CD4-positive, alpha-beta memory T cell (primary cell): ENCODE measurements at regions of chr10 and their contacts with region 1.

Region 1: GRCh38 chr10:11757821-11758463 is 15.8 kb downstream of the ECHDC3 start:
- DNase-seq: peak; percentile 70 to 82 (median 76)
- H3K4me3 ChIP-seq: no peak overlapping the region
- H3K4me3 Mint-ChIP-seq: no peak overlapping the region
- H3K27ac ChIP-seq: no peak overlapping the region
- H3K27ac Mint-ChIP-seq: peak overlapping the region in 2 of 7 donors; percentile 25 to 66
- H3K4me1 ChIP-seq: no peaks in the 10 kb centered on the region
- H3K4me1 Mint-ChIP-seq: peaks cover 0 to 4% (median 3%) of the 10 kb centered on the region in 4 donors
- H3K27me3 ChIP-seq: no peaks in the 10 kb centered on the region
- H3K27me3 Mint-ChIP-seq: peaks cover 0 to 1% of the 10 kb centered on the region in 2 donors

Region 2: GRCh38 chr10:11515596-11516430 is 242.1 kb before region 1 on chr10:
- CTCF ChIA-PET with region 1: interaction called, 132 read pairs
- POLR2A ChIA-PET with region 1: interaction called, 4 read pairs
- intact Hi-C with region 1: loop called (anchors 1 kb)
- DNase-seq: peak; percentile 43 to 60 (median 58)
- H3K4me3 ChIP-seq: no peak overlapping the region
- H3K4me3 Mint-ChIP-seq: no peak overlapping the region
- H3K27ac ChIP-seq: no peak overlapping the region
- H3K27ac Mint-ChIP-seq: no peak overlapping the region
- H3K4me1 ChIP-seq: no peaks in the 10 kb centered on the region
- H3K4me1 Mint-ChIP-seq: peaks cover 2 to 4% (median 3%) of the 10 kb centered on the region in 4 donors
- H3K27me3 ChIP-seq: no peaks in the 10 kb centered on the region
- H3K27me3 Mint-ChIP-seq: peaks cover 0 to 2% of the 10 kb centered on the region in 2 donors

Region 3: DNA sequence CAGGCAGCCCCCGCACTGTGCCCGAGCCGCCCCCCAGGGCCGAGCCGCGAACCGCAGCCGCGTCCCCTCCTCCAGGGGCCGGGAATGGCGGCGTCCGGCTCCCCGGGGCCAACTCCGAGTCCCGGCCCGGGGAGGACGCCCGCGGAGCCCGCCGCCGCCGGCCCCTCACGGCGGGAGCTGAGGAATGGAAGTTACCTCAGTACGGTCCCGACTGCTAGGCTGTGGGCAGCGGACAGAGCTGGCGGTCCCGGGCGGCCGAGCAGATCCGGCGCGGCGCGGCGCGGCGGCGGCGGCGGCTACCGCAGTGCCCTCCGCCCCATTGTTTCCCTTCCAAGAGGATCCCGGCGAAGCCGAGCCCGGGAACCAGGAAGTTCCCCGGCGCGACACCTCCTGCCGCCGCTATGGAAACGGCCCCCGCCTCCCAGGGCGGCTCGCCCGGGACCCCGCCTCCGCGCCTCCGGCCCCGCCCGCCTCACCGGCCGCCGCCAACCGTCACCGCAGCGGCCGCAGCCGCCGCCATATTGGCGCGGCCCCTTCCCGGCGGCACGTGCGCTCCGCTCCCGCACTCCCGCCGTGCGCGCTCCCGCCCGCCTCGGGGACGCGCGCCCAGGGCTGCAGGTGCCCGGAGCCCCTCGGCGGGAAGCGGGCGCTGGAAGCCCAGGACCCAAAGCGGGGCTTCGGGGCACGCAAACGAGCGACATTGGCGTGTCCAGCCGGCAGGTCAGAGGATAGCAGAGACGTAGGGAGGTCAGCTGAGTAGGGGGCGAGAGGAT is 146.5 kb before region 1 on chr10 and contains the start of gene USP6NL:
- CTCF ChIA-PET with region 1: no interaction called
- POLR2A ChIA-PET with region 1: no interaction called
- intact Hi-C with region 1: loop called (anchors 10 kb)
- DNase-seq: peak; percentile 48 to 66 (median 59)
- H3K4me3 ChIP-seq: peak within 1 kb of the TSS; percentile 46 to 71
- H3K4me3 Mint-ChIP-seq: peak within 1 kb of the TSS; percentile 89 to 95 (median 94)
- H3K27ac ChIP-seq: peak within 1 kb of the TSS; percentile 25
- H3K27ac Mint-ChIP-seq: peak within 1 kb of the TSS; percentile 80 to 94 (median 91)
- H3K4me1 ChIP-seq: peaks cover 27% of the 10 kb centered on the region
- H3K4me1 Mint-ChIP-seq: peaks cover 24 to 42% (median 39%) of the 10 kb centered on the region in 4 donors
- H3K27me3 ChIP-seq: no peaks in the 10 kb centered on the region
- H3K27me3 Mint-ChIP-seq: peaks cover 1 to 2% of the 10 kb centered on the region in 2 donors
- total RNA-seq, gene USP6NL: 3.9 to 4.8 TPM

Region 4: GRCh38 chr10:11684717-11685645 is 73.0 kb before region 1 on chr10:
- CTCF ChIA-PET with region 1: interaction called, 12 read pairs
- POLR2A ChIA-PET with region 1: no interaction called
- intact Hi-C with region 1: no loop called
- DNase-seq: peak; percentile 75 to 87 (median 80)
- H3K4me3 ChIP-seq: peak overlapping the region; percentile 7 to 24
- H3K4me3 Mint-ChIP-seq: peak overlapping the region; percentile 85 to 93 (median 90)
- H3K27ac ChIP-seq: peak overlapping the region; percentile 71
- H3K27ac Mint-ChIP-seq: peak overlapping the region; percentile 94 to 100 (median 98)
- H3K4me1 ChIP-seq: peaks cover 37% of the 10 kb centered on the region
- H3K4me1 Mint-ChIP-seq: peaks cover 26 to 46% (median 39%) of the 10 kb centered on the region in 4 donors
- H3K27me3 ChIP-seq: no peaks in the 10 kb centered on the region
- H3K27me3 Mint-ChIP-seq: no peaks in the 10 kb centered on the region

Region 5: DNA sequence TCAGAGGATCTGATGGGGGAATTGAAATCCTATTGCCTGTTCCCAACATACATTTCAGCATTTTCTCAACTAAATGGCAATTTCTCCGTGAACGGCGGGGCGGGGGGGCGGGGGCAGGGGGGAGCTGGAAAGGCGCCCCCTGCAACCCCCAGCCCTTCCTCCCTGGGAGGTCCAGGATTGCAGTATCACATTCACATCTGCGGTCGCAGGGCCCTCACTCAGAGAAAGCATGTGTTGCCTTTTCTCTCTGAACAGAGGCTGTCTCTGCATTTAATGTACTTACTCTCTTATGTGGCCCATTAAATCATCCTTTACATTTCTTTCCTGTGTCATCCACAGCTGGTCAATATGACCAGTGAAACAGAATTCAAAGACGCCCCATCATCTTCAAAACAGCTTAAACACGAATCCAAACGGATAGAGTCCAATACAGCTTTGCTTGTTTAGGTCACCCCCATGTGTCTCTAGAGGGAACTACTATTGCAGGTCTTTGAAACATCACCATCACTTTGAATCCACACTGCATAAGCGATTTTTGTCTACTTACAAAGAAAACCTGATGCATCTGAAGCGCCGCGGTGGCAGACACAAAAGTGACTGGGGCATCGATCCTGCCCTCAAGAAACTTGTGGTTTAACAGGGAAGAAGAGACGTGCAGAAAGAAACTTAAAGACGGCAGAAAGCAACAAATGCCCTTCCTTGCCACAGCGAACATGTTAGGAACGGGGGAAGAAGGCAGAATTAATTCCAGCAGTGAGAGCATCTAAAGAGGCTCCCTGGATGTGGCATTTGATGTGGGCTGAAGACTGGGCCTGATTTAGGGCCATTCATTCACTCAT is 32.8 kb before region 1 on chr10:
- CTCF ChIA-PET with region 1: interaction called, 7 read pairs
- POLR2A ChIA-PET with region 1: no interaction called
- intact Hi-C with region 1: loop called (anchors 1 kb)
- DNase-seq: peak in 4 of 5 donors; percentile 31 to 45 (median 35)
- H3K4me3 ChIP-seq: no peak overlapping the region
- H3K4me3 Mint-ChIP-seq: no peak overlapping the region
- H3K27ac ChIP-seq: no peak overlapping the region
- H3K27ac Mint-ChIP-seq: no peak overlapping the region
- H3K4me1 ChIP-seq: no peaks in the 10 kb centered on the region
- H3K4me1 Mint-ChIP-seq: peaks cover 0 to 5% (median 2%) of the 10 kb centered on the region in 4 donors
- H3K27me3 ChIP-seq: no peaks in the 10 kb centered on the region
- H3K27me3 Mint-ChIP-seq: peaks cover 5 to 6% of the 10 kb centered on the region in 2 donors

Region 6: DNA sequence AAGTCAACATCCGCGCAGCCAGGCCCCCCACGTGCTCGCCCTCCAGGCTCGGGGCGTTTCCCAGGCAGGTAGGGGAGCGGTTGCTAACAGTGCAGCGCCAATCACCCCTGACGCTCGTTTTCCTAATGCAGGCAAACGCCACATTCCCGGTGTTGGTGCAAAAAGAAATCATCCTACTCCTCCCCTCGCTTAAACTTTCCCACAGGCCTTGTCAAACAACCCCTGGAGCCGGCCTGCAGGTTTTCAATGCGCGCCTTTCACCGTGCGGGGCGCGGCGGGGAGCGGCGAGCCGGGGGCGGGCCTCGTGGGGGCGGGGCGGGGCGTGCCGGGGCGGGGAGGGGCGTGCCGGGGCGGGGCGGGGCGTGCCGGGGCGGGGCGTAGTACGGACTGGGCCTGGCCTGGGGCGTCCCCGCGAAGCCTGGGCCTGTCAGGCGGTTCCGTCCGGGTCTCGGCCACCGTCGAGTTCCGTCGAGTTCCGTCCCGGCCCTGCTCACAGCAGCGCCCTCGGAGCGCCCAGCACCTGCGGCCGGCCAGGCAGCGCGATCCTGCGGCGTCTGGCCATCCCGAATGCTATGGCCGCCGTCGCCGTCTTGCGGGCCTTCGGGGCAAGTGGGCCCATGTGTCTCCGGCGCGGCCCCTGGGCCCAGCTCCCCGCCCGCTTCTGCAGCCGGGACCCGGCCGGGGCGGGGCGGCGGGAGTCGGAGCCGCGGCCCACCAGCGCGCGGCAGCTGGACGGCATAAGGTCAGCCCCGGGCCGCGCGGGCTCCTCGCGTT is 15.8 kb before region 1 on chr10 and contains the start of gene ECHDC3:
- CTCF ChIA-PET with region 1: interaction called, 11 read pairs
- POLR2A ChIA-PET with region 1: interaction called, 3 read pairs
- intact Hi-C with region 1: no loop called
- DNase-seq: peak; percentile 17 to 48 (median 37)
- H3K4me3 ChIP-seq: peak within 1 kb of the TSS in 1 of 2 donors; percentile 19
- H3K4me3 Mint-ChIP-seq: peak within 1 kb of the TSS; percentile 43 to 84 (median 76)
- H3K27ac ChIP-seq: no peak within 1 kb of the TSS
- H3K27ac Mint-ChIP-seq: peak within 1 kb of the TSS in 1 of 7 donors; percentile 64
- H3K4me1 ChIP-seq: peaks cover 7% of the 10 kb centered on the region
- H3K4me1 Mint-ChIP-seq: peaks cover 4 to 19% (median 11%) of the 10 kb centered on the region in 4 donors
- H3K27me3 ChIP-seq: no peaks in the 10 kb centered on the region
- H3K27me3 Mint-ChIP-seq: peaks cover 12 to 13% of the 10 kb centered on the region in 2 donors
- total RNA-seq, gene ECHDC3: 0.47 to 0.49 TPM

Region 7: DNA sequence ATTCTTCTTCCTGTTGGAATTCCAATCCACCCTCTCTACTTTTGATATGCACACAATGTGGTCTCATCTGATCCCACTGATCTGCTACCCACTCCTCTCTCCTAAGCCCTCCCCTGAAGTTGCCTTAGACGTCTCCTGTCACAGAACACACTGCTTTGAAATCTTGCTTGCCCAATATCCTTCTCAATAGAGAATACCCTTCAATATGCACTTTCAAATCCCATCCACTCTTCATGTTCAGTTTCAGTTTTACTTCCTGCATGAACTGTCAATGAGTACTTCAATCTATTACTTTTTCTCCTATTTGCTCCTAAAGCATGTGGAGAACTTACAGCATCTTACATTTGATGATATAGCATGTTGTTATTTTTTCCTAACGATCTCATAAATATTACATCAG is 191.2 kb after region 1 on chr10:
- CTCF ChIA-PET with region 1: no interaction called
- POLR2A ChIA-PET with region 1: no interaction called
- intact Hi-C with region 1: no loop called
- DNase-seq: no peak
- H3K4me3 ChIP-seq: no peak overlapping the region
- H3K4me3 Mint-ChIP-seq: no peak overlapping the region
- H3K27ac ChIP-seq: no peak overlapping the region
- H3K27ac Mint-ChIP-seq: peak overlapping the region in 4 of 7 donors; percentile 0 to 19 (median 6)
- H3K4me1 ChIP-seq: no peaks in the 10 kb centered on the region
- H3K4me1 Mint-ChIP-seq: peaks cover 1 to 9% (median 2%) of the 10 kb centered on the region in 4 donors
- H3K27me3 ChIP-seq: no peaks in the 10 kb centered on the region
- H3K27me3 Mint-ChIP-seq: no peaks in the 10 kb centered on the region